HEK293 (cell line): ENCODE measurements at regions of chr19 and their contacts with region 1.

Region 1: GRCh38 chr19:36054119-36054732 is at the start of gene THAP8:
- H3K4me3 ChIP-seq: peak within 1 kb of the TSS; percentile 58
- H3K27ac ChIP-seq: peak within 1 kb of the TSS; percentile 93
- H3K4me1 ChIP-seq: peaks cover 38% of the 10 kb centered on the region
- CTCF ChIP-seq: peak; percentile 92

Region 2: DNA sequence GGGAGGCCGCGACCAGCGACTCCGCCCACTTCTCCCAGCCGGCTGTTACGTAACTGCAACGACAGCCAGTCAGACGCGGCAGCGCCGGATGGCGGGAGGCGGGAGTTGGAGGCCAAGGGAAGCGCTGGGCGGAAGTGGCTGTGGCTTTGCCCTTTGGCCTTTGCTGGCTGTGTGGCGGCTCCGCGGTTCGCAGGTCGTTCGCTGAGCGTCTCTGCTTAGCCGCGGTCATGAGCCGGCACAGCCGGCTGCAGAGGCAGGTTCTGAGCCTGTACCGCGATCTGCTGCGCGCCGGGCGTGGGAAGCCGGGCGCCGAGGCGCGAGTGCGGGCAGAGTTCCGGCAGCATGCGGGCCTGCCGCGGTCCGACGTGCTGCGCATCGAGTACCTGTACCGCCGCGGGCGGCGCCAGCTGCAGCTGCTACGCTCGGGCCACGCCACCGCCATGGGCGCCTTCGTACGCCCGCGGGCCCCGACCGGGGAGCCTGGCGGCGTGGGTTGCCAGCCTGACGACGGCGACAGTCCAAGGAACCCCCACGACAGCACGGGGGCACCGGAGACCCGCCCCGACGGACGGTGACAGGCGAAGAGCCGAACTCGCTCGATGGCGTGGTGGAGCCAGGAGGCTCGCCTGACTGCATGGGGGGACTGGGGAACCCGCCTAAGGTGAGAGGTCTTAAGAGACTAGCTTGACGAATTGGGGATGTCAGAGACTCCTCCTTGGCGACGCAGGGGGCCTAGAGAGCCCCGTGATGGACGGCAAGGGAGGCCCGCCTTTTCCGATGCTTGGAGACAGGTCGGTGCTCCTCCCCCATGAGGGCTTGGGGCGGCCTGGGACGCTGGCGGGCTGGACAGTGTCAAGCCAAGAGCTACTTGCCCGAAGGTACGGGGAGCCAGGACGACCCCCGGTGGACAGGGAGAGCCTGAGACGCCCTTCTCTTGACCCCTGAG is 58.9 kb before region 1 on chr19 and contains the start of gene SDHAF1:
- CTCF ChIA-PET with region 1: interaction called, 8 read pairs
- POLR2A ChIA-PET with region 1: interaction called, 10 read pairs
- H3K4me3 ChIP-seq: peak within 1 kb of the TSS; percentile 47
- H3K27ac ChIP-seq: peak within 1 kb of the TSS; percentile 84
- H3K4me1 ChIP-seq: peaks cover 21% of the 10 kb centered on the region
- CTCF ChIP-seq: no peak; the same call in 1 of the 2 replicates

Region 3: DNA sequence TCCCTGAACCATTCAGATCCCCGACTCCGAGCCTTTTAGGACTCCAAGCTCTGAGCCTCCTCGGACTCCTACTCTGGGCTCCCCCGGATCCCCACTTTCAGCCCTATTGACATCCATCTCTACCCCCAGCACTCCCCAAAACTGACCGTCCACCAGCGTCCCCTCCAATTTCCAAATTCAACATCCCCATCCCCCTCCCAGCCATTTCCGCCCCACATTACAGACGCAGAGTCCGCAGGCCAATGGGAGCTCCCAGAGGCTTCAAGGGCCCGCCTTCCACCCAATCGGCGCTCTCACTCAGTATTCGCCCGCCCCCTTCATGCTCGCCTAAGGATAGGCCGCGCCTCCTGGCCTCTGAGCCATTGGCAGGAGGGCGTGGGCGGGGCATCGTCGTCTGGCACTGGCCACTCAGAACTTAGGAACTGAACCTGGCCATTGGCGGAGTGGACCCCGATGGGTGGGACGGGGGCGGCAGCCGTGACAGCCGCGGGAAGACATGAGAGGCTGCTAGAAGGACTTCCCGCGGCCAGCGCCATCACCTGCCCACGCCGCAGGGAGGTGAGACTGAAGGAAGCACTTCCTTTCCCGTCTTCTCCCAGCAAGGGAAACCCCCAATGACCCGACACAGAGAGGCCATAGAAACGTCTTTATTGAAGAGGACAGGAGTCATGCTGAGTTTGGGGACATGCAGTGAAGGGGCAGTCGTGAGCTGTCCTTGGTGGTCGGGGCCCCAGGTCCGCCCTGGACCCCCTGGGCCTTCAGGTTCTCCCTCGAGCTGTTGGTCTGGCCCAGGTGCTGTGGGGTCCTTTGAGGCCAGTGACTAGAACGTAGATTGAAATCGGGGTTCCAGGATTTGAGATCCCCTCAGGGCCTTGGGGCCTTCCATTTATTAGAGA is 39.9 kb before region 1 on chr19 and contains the start of gene ALKBH6:
- CTCF ChIA-PET with region 1: interaction called, 6 read pairs
- POLR2A ChIA-PET with region 1: interaction called, 26 read pairs
- H3K4me3 ChIP-seq: peak within 1 kb of the TSS; percentile 61
- H3K27ac ChIP-seq: peak within 1 kb of the TSS; percentile 75
- H3K4me1 ChIP-seq: peaks cover 22% of the 10 kb centered on the region
- CTCF ChIP-seq: peak; percentile 81

Region 4: GRCh38 chr19:36073121-36073872 is 19.1 kb after region 1 on chr19:
- CTCF ChIA-PET with region 1: interaction called, 42 read pairs
- POLR2A ChIA-PET with region 1: interaction called, 41 read pairs
- H3K4me3 ChIP-seq: no peak overlapping the region
- H3K27ac ChIP-seq: peak overlapping the region; percentile 31; the same call in 1 of the 2 replicates
- H3K4me1 ChIP-seq: peaks cover 21% of the 10 kb centered on the region
- CTCF ChIP-seq: no peak

Region 5: DNA sequence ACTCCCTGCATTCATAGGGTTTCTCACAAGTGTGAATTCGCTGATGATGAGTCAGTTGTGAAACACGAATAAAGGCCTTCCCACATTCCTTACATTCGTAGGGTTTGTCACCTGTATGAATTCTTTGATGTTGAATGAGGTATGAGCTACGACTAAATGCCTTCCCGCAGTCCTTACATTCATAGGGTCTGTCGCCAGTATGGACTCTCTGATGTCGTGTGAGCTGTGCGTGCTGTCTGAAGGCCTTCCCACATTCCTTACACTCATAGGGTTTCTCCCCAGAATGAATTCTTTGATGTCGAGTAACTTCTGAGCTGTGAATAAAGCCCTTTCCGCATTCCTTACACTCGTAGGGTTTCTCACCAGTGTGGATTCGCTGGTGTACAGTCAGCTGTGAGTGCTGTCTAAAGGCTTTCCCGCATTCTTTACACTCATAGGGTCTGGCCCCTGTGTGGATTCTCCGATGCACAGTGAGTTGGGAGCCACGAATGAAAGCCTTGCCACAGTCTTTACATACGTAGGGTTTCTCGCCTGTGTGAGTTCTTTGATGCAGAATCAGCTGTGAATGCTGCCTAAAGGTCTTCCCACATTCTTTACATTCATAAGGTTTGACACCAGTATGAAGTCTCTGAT is 128.5 kb after region 1 on chr19:
- CTCF ChIA-PET with region 1: no interaction called
- POLR2A ChIA-PET with region 1: no interaction called
- H3K4me3 ChIP-seq: no peak overlapping the region
- H3K27ac ChIP-seq: no peak overlapping the region
- H3K4me1 ChIP-seq: no peaks in the 10 kb centered on the region
- CTCF ChIP-seq: no peak